ENCODE measurements at regions of chr2 and their contacts with region 1.

Region 1: DNA sequence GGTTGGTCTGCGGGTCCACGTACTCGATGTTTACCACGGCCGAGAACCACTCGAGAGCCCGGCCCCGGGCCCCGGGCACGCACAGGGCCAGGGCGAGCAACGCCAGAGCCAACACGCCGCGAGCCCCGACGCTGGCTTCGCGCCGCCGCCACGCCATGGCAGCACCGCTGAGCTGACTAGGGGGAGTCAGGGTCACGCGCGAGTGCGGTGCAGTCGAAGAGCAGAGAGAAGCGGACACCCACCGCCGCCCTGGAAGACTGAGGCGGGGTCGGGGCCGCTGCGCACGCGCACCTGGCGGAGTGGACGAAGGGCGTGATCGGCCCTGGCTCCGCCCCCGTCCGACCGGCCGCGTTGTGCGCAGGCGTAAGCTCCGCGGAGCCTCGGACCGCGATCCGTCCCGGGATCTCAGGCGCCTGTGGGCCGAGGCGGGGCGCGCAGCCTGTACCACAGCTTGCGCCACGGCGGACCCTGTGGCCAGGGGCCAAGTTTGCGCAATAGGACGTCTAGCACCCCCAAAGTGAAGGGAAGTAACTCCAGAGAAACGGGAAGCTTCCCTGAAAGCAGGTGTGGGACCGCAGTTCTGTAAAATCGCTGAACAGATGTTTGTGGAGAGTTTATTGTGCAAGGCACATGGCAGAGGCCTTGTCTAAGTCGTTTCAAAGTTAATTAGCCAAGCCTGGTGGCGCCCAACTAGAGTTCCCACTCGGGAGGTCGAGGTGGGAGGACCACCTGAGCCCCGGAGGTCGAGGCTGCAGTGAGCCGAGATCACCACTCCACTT is at the start of gene RNF149:
- DNase-seq: peak; percentile 80 to 98 (median 86)
- ATAC-seq: peak; percentile 84
- H3K4me3 ChIP-seq: peak within 1 kb of the TSS; percentile 84
- H3K4me3 Mint-ChIP-seq: peak within 1 kb of the TSS; percentile 91 to 100 (median 98)
- H3K27ac ChIP-seq: peak within 1 kb of the TSS; percentile 88
- H3K27ac Mint-ChIP-seq: peak within 1 kb of the TSS; percentile 91 to 99 (median 98)
- H3K4me1 ChIP-seq: peaks cover 60 to 63% of the 10 kb centered on the region in 2 donors
- H3K4me1 Mint-ChIP-seq: peaks cover 56 to 83% (median 74%) of the 10 kb centered on the region in 7 donors
- H3K27me3 ChIP-seq: no peaks in the 10 kb centered on the region
- H3K27me3 Mint-ChIP-seq: peaks cover 0 to 4% (median 0%) of the 10 kb centered on the region in 5 donors
- total RNA-seq, gene RNF149: 88.9 to 159 (median 114) TPM

Region 2: DNA sequence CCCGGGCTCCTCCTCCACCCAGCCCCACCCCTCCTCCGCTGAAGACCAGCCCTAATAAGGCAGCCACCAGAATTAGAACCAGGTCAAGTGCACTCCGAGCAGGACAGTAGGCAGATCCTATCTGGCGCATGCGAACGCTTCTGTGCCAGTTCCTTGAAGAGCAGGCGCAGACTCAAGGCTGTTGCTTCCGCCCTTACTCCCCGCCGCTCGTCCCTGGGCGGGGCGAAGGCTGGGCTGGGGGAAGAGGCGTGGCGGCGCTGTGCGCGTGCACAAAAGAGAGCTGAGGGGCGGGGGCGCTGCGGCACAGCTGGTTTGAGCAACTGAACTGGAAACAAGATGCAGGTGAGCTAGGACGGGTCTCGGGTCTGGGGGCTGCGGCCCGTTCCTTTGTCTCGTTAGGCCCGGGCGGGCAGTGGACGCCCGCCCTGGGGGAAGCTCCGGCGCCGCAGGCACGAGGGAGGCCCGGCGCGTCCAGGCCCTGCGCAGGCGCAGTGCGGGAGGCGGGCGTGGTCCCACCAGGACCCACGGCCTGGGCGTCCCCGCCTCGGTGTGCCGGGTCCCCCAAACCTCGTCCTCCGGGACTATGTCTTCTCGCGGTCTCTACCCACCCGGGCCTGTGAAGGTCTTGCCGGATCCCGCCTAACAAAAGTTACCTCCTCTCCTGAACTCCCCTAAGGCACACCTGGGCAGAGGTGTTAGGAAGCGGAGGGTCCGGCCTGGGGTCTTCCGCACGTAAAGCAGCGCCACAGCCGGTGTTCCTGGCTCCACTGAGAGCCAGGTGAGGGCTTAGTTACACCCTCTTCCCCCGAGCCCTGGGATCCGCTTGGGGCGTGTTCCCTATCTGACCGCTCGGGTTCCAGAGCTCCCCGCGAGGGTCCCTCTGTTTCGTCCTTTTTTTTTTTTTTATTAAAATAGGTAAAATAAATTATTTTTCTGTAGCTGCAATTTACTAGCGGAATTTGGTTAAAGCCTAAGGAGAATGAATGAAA is 745.6 kb before region 1 on chr2 and contains the start of gene PDCL3:
- CTCF ChIA-PET with region 1: no interaction called
- POLR2A ChIA-PET with region 1: no interaction called
- intact Hi-C with region 1: loop called in 1 of 2 experiments (anchors 1 kb)
- DNase-seq: peak; percentile 91 to 97 (median 96)
- ATAC-seq: peak; percentile 94
- H3K4me3 ChIP-seq: peak within 1 kb of the TSS; percentile 99
- H3K4me3 Mint-ChIP-seq: peak within 1 kb of the TSS; percentile 85 to 100 (median 97)
- H3K27ac ChIP-seq: peak within 1 kb of the TSS; percentile 78
- H3K27ac Mint-ChIP-seq: peak within 1 kb of the TSS; percentile 97 to 99 (median 99)
- H3K4me1 ChIP-seq: peaks cover 15 to 16% of the 10 kb centered on the region in 2 donors
- H3K4me1 Mint-ChIP-seq: peaks cover 14 to 64% (median 52%) of the 10 kb centered on the region in 7 donors
- H3K27me3 ChIP-seq: no peaks in the 10 kb centered on the region
- H3K27me3 Mint-ChIP-seq: peaks cover 0 to 2% (median 0%) of the 10 kb centered on the region in 5 donors
- total RNA-seq, gene PDCL3: 16.6 to 31.9 (median 19.9) TPM

Region 3: GRCh38 chr2:101001691-101002561 is 306.7 kb before region 1 on chr2 and contains the start of gene RPL31:
- CTCF ChIA-PET with region 1: no interaction called
- POLR2A ChIA-PET with region 1: no interaction called
- intact Hi-C with region 1: loop called (anchors 1 to 5 kb)
- DNase-seq: peak; percentile 86 to 97 (median 95)
- ATAC-seq: peak; percentile 99
- H3K4me3 ChIP-seq: peak within 1 kb of the TSS; percentile 93
- H3K4me3 Mint-ChIP-seq: peak within 1 kb of the TSS; percentile 91 to 99 (median 95)
- H3K27ac ChIP-seq: peak within 1 kb of the TSS; percentile 86
- H3K27ac Mint-ChIP-seq: peak within 1 kb of the TSS; percentile 88 to 99 (median 98)
- H3K4me1 ChIP-seq: peaks cover 16 to 18% of the 10 kb centered on the region in 2 donors
- H3K4me1 Mint-ChIP-seq: peaks cover 32 to 48% (median 44%) of the 10 kb centered on the region in 7 donors
- H3K27me3 ChIP-seq: no peaks in the 10 kb centered on the region
- H3K27me3 Mint-ChIP-seq: peaks cover 0 to 5% (median 0%) of the 10 kb centered on the region in 5 donors
- total RNA-seq, gene RPL31: 1,182 to 2,835 (median 2,548) TPM

Region 4: DNA sequence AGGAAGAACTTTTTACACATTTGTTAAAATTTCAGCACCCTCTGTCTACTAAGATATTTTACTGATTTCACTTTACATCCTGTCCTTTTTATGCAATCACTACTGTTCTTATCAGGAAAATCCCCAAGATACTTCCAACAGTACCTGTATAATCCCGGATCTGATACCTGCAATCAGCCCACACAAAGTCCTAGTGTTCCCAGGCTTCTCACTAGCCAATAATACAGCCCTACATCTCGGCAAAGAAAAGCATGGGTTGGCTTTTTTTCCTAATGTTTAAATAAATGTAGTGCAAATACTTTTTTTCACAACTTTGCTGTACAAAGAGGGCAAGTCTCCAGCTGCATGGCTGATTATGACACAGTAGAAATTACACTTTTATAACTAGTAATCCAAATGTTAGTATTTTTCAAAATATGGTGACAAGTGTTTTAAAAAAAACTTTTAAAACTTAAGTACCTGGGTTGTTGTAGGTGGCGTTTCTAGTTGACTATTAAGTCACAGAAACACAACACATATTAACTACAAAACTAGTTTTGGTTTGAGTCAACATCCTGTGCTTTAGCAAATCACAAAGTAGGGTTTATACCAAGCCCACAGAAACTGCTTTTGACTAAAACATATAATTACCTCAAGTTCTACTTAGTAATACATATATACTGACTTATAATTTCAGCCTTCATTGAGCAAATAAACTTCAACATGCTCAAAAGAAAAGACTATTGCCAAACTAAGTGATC is 36.4 kb before region 1 on chr2:
- CTCF ChIA-PET with region 1: no interaction called
- POLR2A ChIA-PET with region 1: interaction called, 3 read pairs
- intact Hi-C with region 1: loop called (anchors 2 to 5 kb)
- DNase-seq: no peak
- ATAC-seq: peak; percentile 29
- H3K4me3 ChIP-seq: no peak overlapping the region
- H3K4me3 Mint-ChIP-seq: peak overlapping the region in 1 of 10 donors; percentile 69
- H3K27ac ChIP-seq: peak overlapping the region; percentile 5
- H3K27ac Mint-ChIP-seq: peak overlapping the region; percentile 12 to 84 (median 69)
- H3K4me1 ChIP-seq: peaks cover 0 to 3% of the 10 kb centered on the region in 2 donors
- H3K4me1 Mint-ChIP-seq: peaks cover 17 to 49% (median 32%) of the 10 kb centered on the region in 7 donors
- H3K27me3 ChIP-seq: no peaks in the 10 kb centered on the region
- H3K27me3 Mint-ChIP-seq: no peaks in the 10 kb centered on the region

Region 5: DNA sequence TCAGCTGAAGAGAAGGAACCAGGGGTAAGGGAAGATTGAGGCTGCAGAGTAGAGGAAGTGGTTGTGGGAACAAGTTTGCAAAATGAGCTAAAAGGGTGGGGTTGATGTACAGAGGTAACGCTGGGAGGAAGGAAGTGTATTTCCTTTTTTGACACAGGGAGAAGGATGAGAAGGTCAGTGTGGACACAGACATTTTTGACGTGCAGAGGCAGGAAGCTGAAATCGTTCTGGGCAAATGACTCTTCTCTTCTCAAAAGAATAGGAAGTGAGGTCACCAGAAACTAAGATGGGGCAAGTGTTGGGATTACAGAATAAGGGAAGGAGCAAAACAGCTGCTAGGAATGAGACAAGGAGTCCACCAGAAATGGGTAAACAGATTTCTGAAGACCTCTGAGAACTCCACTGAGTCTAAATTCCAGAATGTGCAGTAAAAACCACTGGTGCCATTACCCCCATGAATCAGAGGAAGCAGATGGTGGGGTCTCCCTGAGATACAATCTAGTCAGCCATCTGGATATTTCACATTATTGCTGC is 19.9 kb after region 1 on chr2:
- CTCF ChIA-PET with region 1: interaction called, 9 read pairs
- POLR2A ChIA-PET with region 1: interaction called, 104 read pairs
- intact Hi-C with region 1: loop called (anchors 1 kb)
- DNase-seq: peak in 7 of 9 donors; percentile 43 to 84 (median 81)
- ATAC-seq: peak; percentile 94
- H3K4me3 ChIP-seq: peak overlapping the region; percentile 43
- H3K4me3 Mint-ChIP-seq: no peak overlapping the region
- H3K27ac ChIP-seq: peak overlapping the region; percentile 49
- H3K27ac Mint-ChIP-seq: no peak overlapping the region
- H3K4me1 ChIP-seq: peaks cover 34 to 60% of the 10 kb centered on the region in 2 donors
- H3K4me1 Mint-ChIP-seq: peaks cover 8 to 29% (median 23%) of the 10 kb centered on the region in 7 donors
- H3K27me3 ChIP-seq: no peaks in the 10 kb centered on the region
- H3K27me3 Mint-ChIP-seq: no peaks in the 10 kb centered on the region

Region 6: GRCh38 chr2:101387151-101387807 is 78.7 kb after region 1 on chr2 and contains the start of gene CREG2:
- CTCF ChIA-PET with region 1: no interaction called
- POLR2A ChIA-PET with region 1: interaction called, 3 read pairs
- intact Hi-C with region 1: loop called (anchors 2 to 5 kb)
- DNase-seq: peak; percentile 26 to 71 (median 53)
- ATAC-seq: peak; percentile 91
- H3K4me3 ChIP-seq: peak within 1 kb of the TSS; percentile 41
- H3K4me3 Mint-ChIP-seq: peak within 1 kb of the TSS; percentile 67 to 84 (median 78)
- H3K27ac ChIP-seq: no peak within 1 kb of the TSS
- H3K27ac Mint-ChIP-seq: peak within 1 kb of the TSS in 1 of 9 donors; percentile 20
- H3K4me1 ChIP-seq: peaks cover 3% of the 10 kb centered on the region in 2 donors
- H3K4me1 Mint-ChIP-seq: peaks cover 5 to 15% (median 10%) of the 10 kb centered on the region in 7 donors
- H3K27me3 ChIP-seq: peaks cover 0 to 11% of the 10 kb centered on the region in 2 donors
- H3K27me3 Mint-ChIP-seq: peaks cover 34 to 80% (median 52%) of the 10 kb centered on the region in 5 donors
- total RNA-seq, gene CREG2: 0.56 TPM in 1 of 5 experiments, not detected in the others

Region 7: DNA sequence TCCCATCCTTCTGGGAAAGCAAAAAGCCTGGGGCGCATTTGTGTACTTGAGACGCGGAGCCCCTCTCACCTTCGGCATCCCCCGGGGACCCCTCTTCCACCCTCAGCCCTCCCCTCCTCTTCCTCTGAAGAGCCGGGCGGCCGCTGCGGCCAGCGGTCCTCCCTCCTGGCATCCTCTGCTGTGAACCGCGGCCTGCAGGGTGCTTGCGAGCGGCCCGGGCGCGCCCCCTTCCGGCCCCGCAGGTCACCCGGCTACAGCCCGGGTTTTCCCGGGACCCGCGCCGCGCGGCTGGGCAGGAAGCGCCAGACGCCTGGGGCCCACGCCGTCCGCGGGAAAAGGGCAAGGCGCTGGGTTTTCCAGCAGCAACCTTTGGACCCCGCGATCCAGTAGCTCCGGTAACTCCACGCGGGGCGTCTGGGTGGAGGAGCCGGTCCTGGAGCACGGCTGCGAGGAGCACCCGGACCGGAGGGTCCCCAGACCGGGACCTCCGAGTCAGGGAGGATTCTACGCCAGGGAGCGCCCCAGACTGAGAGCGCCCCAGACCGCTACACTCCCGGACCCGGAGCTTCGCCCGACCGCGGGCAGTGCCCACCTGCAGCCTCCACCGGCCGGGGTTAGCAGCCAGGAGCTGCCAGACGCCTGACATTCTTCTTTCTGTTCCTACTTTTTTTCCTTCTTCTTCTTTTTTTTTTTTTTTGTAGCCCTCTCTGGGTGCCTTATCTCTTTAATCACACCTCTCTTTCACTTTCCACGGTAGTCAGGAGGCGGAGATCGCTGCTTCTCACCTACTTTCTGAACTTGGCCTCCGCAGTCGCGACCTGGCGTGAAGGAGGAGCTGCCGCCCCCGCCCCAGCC is 1047.1 kb after region 1 on chr2 and contains the start of gene IL18R1:
- CTCF ChIA-PET with region 1: no interaction called
- POLR2A ChIA-PET with region 1: no interaction called
- intact Hi-C with region 1: loop called in 1 of 2 experiments (anchors 10 kb)
- DNase-seq: peak; percentile 37 to 85 (median 57)
- ATAC-seq: peak; percentile 93
- H3K4me3 ChIP-seq: peak within 1 kb of the TSS; percentile 82
- H3K4me3 Mint-ChIP-seq: peak within 1 kb of the TSS; percentile 93 to 99 (median 96)
- H3K27ac ChIP-seq: peak within 1 kb of the TSS; percentile 79
- H3K27ac Mint-ChIP-seq: peak within 1 kb of the TSS; percentile 83 to 96 (median 92)
- H3K4me1 ChIP-seq: peaks cover 6 to 19% of the 10 kb centered on the region in 2 donors
- H3K4me1 Mint-ChIP-seq: peaks cover 17 to 48% (median 37%) of the 10 kb centered on the region in 7 donors
- H3K27me3 ChIP-seq: no peaks in the 10 kb centered on the region
- H3K27me3 Mint-ChIP-seq: no peaks in the 10 kb centered on the region
- total RNA-seq, gene IL18R1: 2.1 to 52.8 (median 5.3) TPM